BJ (cell line): ENCODE measurements at regions of chr5 and their contacts with region 1.

Region 1: DNA sequence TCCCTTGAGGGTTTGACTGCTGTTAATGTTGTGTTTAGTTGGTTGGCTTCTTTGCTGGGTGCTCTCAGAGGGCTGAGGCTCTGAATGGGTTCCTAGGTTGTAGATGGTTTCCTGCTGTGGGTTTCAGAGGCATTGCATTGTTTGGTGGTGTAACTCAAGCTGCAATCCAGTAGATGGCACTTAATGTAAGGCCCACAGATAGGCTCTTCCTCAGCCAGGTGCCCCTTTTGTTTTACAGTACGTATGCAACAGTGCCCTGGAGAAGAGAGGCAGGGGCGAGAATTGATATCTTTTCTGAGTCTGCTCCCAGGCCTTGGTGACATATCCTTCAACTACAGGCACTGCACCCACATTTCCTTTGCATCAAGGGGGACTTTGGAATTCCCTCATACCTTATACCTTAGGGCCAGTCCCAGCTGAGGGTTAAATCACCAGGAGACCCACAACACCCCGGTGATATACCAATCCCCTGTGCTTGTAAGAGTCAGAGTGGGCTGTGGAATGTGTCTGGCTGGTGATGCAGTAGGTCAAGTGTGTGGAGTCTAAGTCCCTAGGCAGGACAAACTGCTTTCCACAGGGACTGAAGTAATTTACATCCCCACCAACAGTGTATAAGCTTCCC is 7.0 kb upstream of the UGT3A2 start:
- DNase-seq: no peak
- H3K4me3 ChIP-seq: no peak overlapping the region
- H3K27me3 ChIP-seq: peaks cover 19% of the 10 kb centered on the region
- CTCF ChIP-seq: peak; percentile 4; the same call in 1 of the 2 replicates

Region 2: GRCh38 chr5:36052538-36052937 is 21.2 kb before region 1 on chr5:
- CTCF ChIA-PET with region 1: no interaction called
- POLR2A ChIA-PET with region 1: no interaction called
- DNase-seq: no peak
- H3K4me3 ChIP-seq: no peak overlapping the region
- H3K27me3 ChIP-seq: no peaks in the 10 kb centered on the region; the same call in 1 of the 2 replicates
- CTCF ChIP-seq: no peak

Region 3: GRCh38 chr5:36089989-36090564 is 16.4 kb after region 1 on chr5:
- CTCF ChIA-PET with region 1: interaction called, 38 read pairs
- POLR2A ChIA-PET with region 1: no interaction called
- DNase-seq: no peak
- H3K4me3 ChIP-seq: no peak overlapping the region
- H3K27me3 ChIP-seq: no peaks in the 10 kb centered on the region; the same call in 1 of the 2 replicates
- CTCF ChIP-seq: peak; percentile 55